Activated CD4-positive, alpha-beta memory T cell treated with anti-CD3 and anti-CD28 coated beads, Interleukin-2, amount 10 ng/mL, durations not matched to agents 7 days and 5 days (primary cell): ENCODE measurements at regions of chr2 and their contacts with region 1.

Region 1: GRCh38 chr2:157443795-157444640 is at the start of gene CYTIP:
- DNase-seq: peak; percentile 81
- H3K4me3 Mint-ChIP-seq: peak within 1 kb of the TSS; percentile 91
- H3K27ac Mint-ChIP-seq: peak within 1 kb of the TSS; percentile 96
- H3K4me1 Mint-ChIP-seq: peaks cover 40% of the 10 kb centered on the region
- H3K27me3 Mint-ChIP-seq: no peaks in the 10 kb centered on the region
- total RNA-seq, gene CYTIP: 389 to 406 TPM

Region 2: GRCh38 chr2:157327621-157328500 is 116.2 kb before region 1 on chr2:
- CTCF ChIA-PET with region 1: interaction called, 36 read pairs
- POLR2A ChIA-PET with region 1: interaction called, 34 read pairs
- DNase-seq: peak; percentile 87
- H3K4me3 Mint-ChIP-seq: no peak overlapping the region
- H3K27ac Mint-ChIP-seq: no peak overlapping the region
- H3K4me1 Mint-ChIP-seq: peaks cover 42% of the 10 kb centered on the region
- H3K27me3 Mint-ChIP-seq: no peaks in the 10 kb centered on the region

Region 3: GRCh38 chr2:157404363-157404762 is 39.7 kb before region 1 on chr2:
- CTCF ChIA-PET with region 1: interaction called, 7 read pairs
- POLR2A ChIA-PET with region 1: interaction called, 380 read pairs
- DNase-seq: peak; percentile 67
- H3K4me3 Mint-ChIP-seq: peak overlapping the region; percentile 50
- H3K27ac Mint-ChIP-seq: peak overlapping the region; percentile 87
- H3K4me1 Mint-ChIP-seq: peaks cover 64% of the 10 kb centered on the region
- H3K27me3 Mint-ChIP-seq: no peaks in the 10 kb centered on the region

Region 4: DNA sequence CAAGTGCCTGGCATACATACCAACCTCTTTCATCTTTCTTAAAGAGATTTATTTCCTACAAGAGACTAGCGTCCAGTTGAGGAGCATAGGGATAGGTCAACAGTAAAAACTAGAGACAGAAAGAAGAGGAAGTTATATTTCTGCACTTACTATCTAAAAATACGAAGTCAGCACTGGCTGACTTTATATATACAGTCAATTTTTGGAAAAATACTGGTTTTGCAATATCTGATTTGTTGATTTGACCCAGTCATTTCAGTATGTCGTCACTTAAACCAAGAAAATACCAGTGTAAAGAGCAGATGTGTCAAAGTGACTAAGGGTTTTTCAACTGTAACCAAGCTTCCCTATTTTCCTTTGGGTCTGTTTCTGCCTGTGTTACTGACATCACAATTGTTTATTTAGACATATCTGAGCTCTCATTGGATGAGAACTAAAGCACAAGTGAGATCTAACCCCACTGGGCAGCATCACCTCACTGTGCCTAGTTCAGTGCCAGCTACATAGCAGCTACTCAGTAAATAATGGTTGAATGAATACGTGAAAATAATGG is 23.2 kb before region 1 on chr2:
- CTCF ChIA-PET with region 1: interaction called, 50 read pairs
- POLR2A ChIA-PET with region 1: interaction called, 797 read pairs
- DNase-seq: no peak
- H3K4me3 Mint-ChIP-seq: no peak overlapping the region
- H3K27ac Mint-ChIP-seq: peak overlapping the region; percentile 88
- H3K4me1 Mint-ChIP-seq: peaks cover 77% of the 10 kb centered on the region
- H3K27me3 Mint-ChIP-seq: no peaks in the 10 kb centered on the region

Region 5: GRCh38 chr2:157460384-157460837 is 16.4 kb after region 1 on chr2:
- CTCF ChIA-PET with region 1: interaction called, 7 read pairs
- POLR2A ChIA-PET with region 1: interaction called, 338 read pairs
- DNase-seq: no peak
- H3K4me3 Mint-ChIP-seq: no peak overlapping the region
- H3K27ac Mint-ChIP-seq: peak overlapping the region; percentile 23
- H3K4me1 Mint-ChIP-seq: peaks cover 88% of the 10 kb centered on the region
- H3K27me3 Mint-ChIP-seq: no peaks in the 10 kb centered on the region

Region 6: GRCh38 chr2:157480182-157480961 is 36.4 kb after region 1 on chr2:
- CTCF ChIA-PET with region 1: interaction called, 11 read pairs
- POLR2A ChIA-PET with region 1: interaction called, 291 read pairs
- DNase-seq: peak; percentile 58
- H3K4me3 Mint-ChIP-seq: peak overlapping the region; percentile 55
- H3K27ac Mint-ChIP-seq: peak overlapping the region; percentile 87
- H3K4me1 Mint-ChIP-seq: peaks cover 72% of the 10 kb centered on the region
- H3K27me3 Mint-ChIP-seq: no peaks in the 10 kb centered on the region

Region 7: DNA sequence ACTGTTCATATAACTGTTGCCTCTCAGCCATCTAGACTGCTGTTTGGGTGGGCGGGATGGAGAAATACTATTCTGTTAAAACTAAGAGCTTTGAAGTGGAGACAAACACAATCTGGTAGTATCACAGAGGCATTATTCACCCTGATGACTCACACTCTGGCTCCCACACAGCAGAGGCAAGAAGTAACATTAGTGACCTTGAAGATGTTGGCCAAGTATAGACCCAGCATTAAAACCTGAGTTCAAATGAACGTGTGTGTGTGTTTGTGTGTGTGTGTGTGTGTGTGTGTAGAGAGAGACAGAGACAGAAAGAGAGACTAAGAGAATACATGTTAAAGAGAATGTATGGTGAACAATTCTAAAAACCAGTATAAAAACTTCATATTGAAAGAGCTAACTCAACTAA is 454.6 kb after region 1 on chr2:
- CTCF ChIA-PET with region 1: no interaction called
- POLR2A ChIA-PET with region 1: interaction called, 39 read pairs
- DNase-seq: peak; percentile 61
- H3K4me3 Mint-ChIP-seq: peak overlapping the region; percentile 81
- H3K27ac Mint-ChIP-seq: peak overlapping the region; percentile 99
- H3K4me1 Mint-ChIP-seq: peaks cover 80% of the 10 kb centered on the region
- H3K27me3 Mint-ChIP-seq: no peaks in the 10 kb centered on the region